Sigmoid colon (tissue), 7 donors: ENCODE measurements at regions of chr2 and their contacts with region 1.

Region 1: GRCh38 chr2:209423562-209424198 is at the start of gene MAP2:
- DNase-seq: peak; percentile 86
- H3K4me3 ChIP-seq: peak within 1 kb of the TSS; percentile 40 to 60 (median 55)
- H3K27ac ChIP-seq: peak within 1 kb of the TSS in 2 of 4 donors; percentile 35 to 64
- H3K4me1 ChIP-seq: peaks cover 0 to 17% (median 15%) of the 10 kb centered on the region in 4 donors
- H3K27me3 ChIP-seq: no peaks in the 10 kb centered on the region
- CTCF ChIP-seq: peak; percentile 17 to 88 (median 36)
- EP300 ChIP-seq: no peak
- POLR2A ChIP-seq: no peak
- total RNA-seq, gene MAP2: 8.4 to 21.8 (median 13.0) TPM

Region 2: GRCh38 chr2:209401788-209402187 is 21.9 kb before region 1 on chr2:
- intact Hi-C with region 1: no loop called
- DNase-seq: no peak
- H3K4me3 ChIP-seq: no peak overlapping the region
- H3K27ac ChIP-seq: no peak overlapping the region
- H3K4me1 ChIP-seq: no peaks in the 10 kb centered on the region
- H3K27me3 ChIP-seq: no peaks in the 10 kb centered on the region
- CTCF ChIP-seq: no peak
- EP300 ChIP-seq: no peak
- POLR2A ChIP-seq: no peak

Region 3: GRCh38 chr2:209476367-209477191 is 52.9 kb after region 1 on chr2:
- intact Hi-C with region 1: loop called (anchors 5 kb)
- DNase-seq: peak; percentile 70
- H3K4me3 ChIP-seq: no peak overlapping the region
- H3K27ac ChIP-seq: peak overlapping the region in 2 of 4 donors; percentile 22 to 28
- H3K4me1 ChIP-seq: peaks cover 0 to 42% (median 29%) of the 10 kb centered on the region in 4 donors
- H3K27me3 ChIP-seq: no peaks in the 10 kb centered on the region
- CTCF ChIP-seq: no peak
- EP300 ChIP-seq: no peak
- POLR2A ChIP-seq: no peak

Region 4: GRCh38 chr2:209495855-209496585 is 72.3 kb after region 1 on chr2:
- intact Hi-C with region 1: no loop called
- DNase-seq: no peak
- H3K4me3 ChIP-seq: no peak overlapping the region
- H3K27ac ChIP-seq: peak overlapping the region; percentile 30 to 79 (median 62)
- H3K4me1 ChIP-seq: peaks cover 0 to 18% (median 7%) of the 10 kb centered on the region in 4 donors
- H3K27me3 ChIP-seq: no peaks in the 10 kb centered on the region
- CTCF ChIP-seq: no peak
- EP300 ChIP-seq: peak in 1 of 4 donors; percentile 60
- POLR2A ChIP-seq: no peak

Region 5: GRCh38 chr2:209556354-209556961 is 132.8 kb after region 1 on chr2:
- intact Hi-C with region 1: loop called (anchors 10 kb)
- DNase-seq: no peak
- H3K4me3 ChIP-seq: no peak overlapping the region
- H3K27ac ChIP-seq: no peak overlapping the region
- H3K4me1 ChIP-seq: no peaks in the 10 kb centered on the region
- H3K27me3 ChIP-seq: no peaks in the 10 kb centered on the region
- CTCF ChIP-seq: peak in 2 of 4 experiments; percentile 6 to 8
- EP300 ChIP-seq: no peak
- POLR2A ChIP-seq: no peak

Region 6: DNA sequence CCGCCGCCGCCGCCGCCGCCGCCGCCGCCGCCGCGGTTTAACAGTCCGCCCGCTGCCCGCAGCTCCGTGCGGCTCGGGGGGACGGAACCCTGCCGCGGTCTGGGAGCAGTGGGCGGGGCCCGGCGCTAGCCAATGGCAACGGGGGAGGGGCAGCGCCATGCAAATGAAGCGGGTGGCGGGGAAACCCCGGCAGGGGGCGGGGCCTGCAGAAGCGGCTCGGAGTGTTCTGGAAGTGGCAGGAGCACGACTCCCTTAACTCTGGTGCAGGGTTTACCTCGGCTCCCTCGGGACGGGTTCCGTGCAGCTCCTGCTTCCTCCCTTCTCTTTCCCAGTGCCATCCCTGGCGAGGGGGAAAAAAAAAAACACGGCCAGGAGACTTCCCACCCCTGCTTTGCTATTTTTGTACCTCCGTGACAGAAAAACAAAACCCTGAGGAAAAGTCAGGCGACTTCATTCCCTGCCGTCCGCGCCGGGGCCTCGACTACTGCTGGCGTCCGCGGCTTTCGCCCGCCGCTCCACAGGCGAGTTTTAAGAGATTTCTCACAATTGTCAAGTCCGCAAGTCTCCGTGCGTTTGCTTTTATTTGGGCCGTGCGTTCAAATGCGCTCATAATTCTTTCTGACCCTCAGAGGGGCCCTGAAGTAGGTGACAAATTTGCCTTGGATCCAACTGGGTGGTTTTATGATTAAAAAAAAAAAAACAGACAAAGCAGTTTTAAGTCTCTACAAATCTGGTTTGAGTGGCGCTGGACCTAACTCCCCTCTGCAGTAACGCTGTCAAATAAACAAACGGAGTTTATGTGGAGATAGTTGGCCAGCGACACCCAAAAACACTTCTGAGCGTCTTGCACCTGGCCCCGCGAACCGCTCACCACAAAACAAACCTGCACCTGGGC is 747.9 kb after region 1 on chr2 and contains the start of gene KANSL1L:
- intact Hi-C with region 1: no loop called
- DNase-seq: peak; percentile 100
- H3K4me3 ChIP-seq: peak within 1 kb of the TSS; percentile 76 to 98 (median 94)
- H3K27ac ChIP-seq: peak within 1 kb of the TSS; percentile 99 to 100 (median 100)
- H3K4me1 ChIP-seq: peaks cover 0 to 39% (median 32%) of the 10 kb centered on the region in 4 donors
- H3K27me3 ChIP-seq: no peaks in the 10 kb centered on the region
- CTCF ChIP-seq: no peak
- EP300 ChIP-seq: peak in 1 of 4 donors; percentile 17
- POLR2A ChIP-seq: peak; percentile 46 to 75
- total RNA-seq, gene KANSL1L: 32.6 to 49.0 (median 47.0) TPM